ENCODE measurements at regions of chr12 and their contacts with region 1.

Region 1: DNA sequence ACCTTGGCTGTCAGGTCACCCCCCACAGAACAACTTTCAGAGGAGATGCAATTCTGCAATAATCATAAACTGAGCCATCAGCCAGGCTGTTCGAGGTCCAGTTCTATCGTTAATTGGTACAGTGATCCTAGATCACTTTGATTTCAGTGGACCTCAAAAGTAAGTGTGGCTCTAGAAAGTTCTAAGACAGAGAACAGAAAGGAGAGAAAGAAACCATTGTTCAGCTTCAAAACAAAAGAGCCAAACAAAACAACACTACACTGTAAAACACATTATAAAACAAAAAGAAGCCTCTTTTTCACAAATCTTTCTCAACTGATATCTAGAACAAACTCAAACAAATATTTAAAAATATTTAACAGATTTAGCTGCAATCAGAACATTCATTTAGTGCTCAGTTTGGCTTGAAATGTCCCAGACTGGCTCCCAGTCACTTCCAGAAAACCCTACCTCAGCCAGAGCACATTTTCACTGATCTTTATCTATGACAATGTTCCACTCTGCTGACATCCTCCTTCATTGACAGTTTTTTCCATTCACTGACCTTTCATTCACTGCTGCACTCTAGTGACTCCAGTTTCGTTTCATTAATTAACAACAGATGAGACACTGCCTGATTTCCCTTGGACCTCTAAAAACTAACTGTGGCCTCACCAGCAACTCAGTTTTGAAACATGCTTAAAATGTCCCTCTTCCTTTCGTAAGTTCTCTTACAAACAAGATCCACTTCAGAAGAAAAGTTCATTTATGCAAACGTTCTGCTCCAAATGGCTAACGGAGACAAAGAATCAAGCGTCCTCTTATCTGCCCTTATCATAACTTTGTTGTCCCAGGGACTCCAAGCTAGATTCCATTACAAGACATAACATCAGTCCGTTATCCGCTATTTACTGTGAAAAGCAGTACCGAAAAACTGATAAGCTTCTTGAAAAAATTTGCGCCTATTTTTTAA is 56.8 kb downstream of the DUSP16 start:
- DNase-seq: no peak
- ATAC-seq: no peak
- H3K4me3 ChIP-seq: no peak overlapping the region
- H3K4me3 Mint-ChIP-seq: peak overlapping the region in 5 of 10 donors; percentile 5 to 58 (median 38)
- H3K27ac ChIP-seq: no peak overlapping the region
- H3K27ac Mint-ChIP-seq: peak overlapping the region in 7 of 9 donors; percentile 6 to 83 (median 70)
- H3K4me1 ChIP-seq: peaks cover 3 to 5% of the 10 kb centered on the region in 2 donors
- H3K4me1 Mint-ChIP-seq: peaks cover 11 to 66% (median 38%) of the 10 kb centered on the region in 7 donors
- H3K27me3 ChIP-seq: no peaks in the 10 kb centered on the region
- H3K27me3 Mint-ChIP-seq: no peaks in the 10 kb centered on the region

Region 2: GRCh38 chr12:12495536-12495935 is 10.3 kb before region 1 on chr12:
- CTCF ChIA-PET with region 1: no interaction called
- POLR2A ChIA-PET with region 1: interaction called, 3 read pairs
- intact Hi-C with region 1: loop called in 1 of 2 experiments (anchors 2 kb)
- DNase-seq: no peak
- ATAC-seq: no peak
- H3K4me3 ChIP-seq: no peak overlapping the region
- H3K4me3 Mint-ChIP-seq: no peak overlapping the region
- H3K27ac ChIP-seq: no peak overlapping the region
- H3K27ac Mint-ChIP-seq: peak overlapping the region in 3 of 9 donors; percentile 4 to 66 (median 19)
- H3K4me1 ChIP-seq: no peaks in the 10 kb centered on the region
- H3K4me1 Mint-ChIP-seq: peaks cover 0 to 14% (median 5%) of the 10 kb centered on the region in 7 donors
- H3K27me3 ChIP-seq: no peaks in the 10 kb centered on the region
- H3K27me3 Mint-ChIP-seq: no peaks in the 10 kb centered on the region

Region 3: DNA sequence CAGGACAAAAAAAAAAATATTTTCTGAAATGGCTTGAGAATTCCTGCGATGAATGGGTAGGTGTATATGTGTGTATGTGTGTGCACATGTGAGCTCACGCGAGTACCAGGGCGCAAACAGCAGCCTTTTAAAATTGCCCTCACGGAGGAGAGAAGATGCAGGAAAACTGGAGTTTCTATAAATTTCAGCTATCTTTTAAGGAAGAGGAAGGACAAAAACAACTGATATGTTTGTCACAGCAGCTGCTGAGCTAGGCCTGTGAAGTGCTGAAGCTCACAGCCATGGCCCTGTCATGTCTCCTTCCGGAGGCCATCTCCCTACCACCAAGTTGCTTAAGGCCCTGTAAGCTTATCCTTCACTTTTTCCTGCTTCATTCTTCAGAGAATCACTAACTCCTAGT is 16.1 kb after region 1 on chr12:
- CTCF ChIA-PET with region 1: no interaction called
- POLR2A ChIA-PET with region 1: interaction called, 3 read pairs
- intact Hi-C with region 1: loop called in 1 of 2 experiments (anchors 2 kb)
- DNase-seq: no peak
- ATAC-seq: no peak
- H3K4me3 ChIP-seq: no peak overlapping the region
- H3K4me3 Mint-ChIP-seq: no peak overlapping the region
- H3K27ac ChIP-seq: no peak overlapping the region
- H3K27ac Mint-ChIP-seq: no peak overlapping the region
- H3K4me1 ChIP-seq: peaks cover 6 to 12% of the 10 kb centered on the region in 2 donors
- H3K4me1 Mint-ChIP-seq: peaks cover 9 to 57% (median 33%) of the 10 kb centered on the region in 7 donors
- H3K27me3 ChIP-seq: no peaks in the 10 kb centered on the region
- H3K27me3 Mint-ChIP-seq: no peaks in the 10 kb centered on the region

Region 4: DNA sequence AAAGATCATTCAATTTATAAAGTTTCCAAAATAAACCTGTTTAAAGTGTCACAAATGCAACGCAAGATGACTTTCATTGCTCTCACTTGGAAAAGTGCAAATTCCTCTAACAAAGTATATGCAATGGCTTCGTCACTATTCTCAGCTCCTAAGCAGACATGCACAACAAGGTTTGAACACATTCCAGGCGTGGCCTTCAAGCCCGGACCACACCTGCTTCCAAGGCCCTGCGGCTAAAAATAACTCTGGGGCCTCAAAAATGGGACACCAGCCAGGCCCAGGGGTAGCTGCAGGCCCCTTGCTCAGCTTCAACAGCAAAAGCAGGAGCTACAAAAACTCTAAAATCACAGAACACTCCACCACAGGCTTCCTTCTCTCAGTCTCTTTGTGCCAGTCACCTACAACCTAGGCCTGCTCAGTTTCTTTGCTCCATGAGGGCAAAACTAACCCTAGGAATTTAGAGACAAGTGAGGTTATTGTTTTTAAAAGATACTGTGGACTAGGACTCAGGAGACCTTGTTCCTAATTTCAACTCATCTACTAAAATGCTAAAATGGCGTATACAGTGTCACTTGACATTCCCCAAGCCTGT is 27.5 kb after region 1 on chr12:
- CTCF ChIA-PET with region 1: no interaction called
- POLR2A ChIA-PET with region 1: no interaction called
- intact Hi-C with region 1: no loop called
- DNase-seq: no peak
- ATAC-seq: no peak
- H3K4me3 ChIP-seq: no peak overlapping the region
- H3K4me3 Mint-ChIP-seq: no peak overlapping the region
- H3K27ac ChIP-seq: peak overlapping the region; percentile 17
- H3K27ac Mint-ChIP-seq: peak overlapping the region in 8 of 9 donors; percentile 4 to 87 (median 66)
- H3K4me1 ChIP-seq: peaks cover 0 to 14% of the 10 kb centered on the region in 2 donors
- H3K4me1 Mint-ChIP-seq: peaks cover 9 to 59% (median 40%) of the 10 kb centered on the region in 7 donors
- H3K27me3 ChIP-seq: no peaks in the 10 kb centered on the region
- H3K27me3 Mint-ChIP-seq: no peaks in the 10 kb centered on the region